CD4-positive, alpha-beta memory T cell (primary cell): ENCODE measurements at regions of chr14 and their contacts with region 1.

Region 1: DNA sequence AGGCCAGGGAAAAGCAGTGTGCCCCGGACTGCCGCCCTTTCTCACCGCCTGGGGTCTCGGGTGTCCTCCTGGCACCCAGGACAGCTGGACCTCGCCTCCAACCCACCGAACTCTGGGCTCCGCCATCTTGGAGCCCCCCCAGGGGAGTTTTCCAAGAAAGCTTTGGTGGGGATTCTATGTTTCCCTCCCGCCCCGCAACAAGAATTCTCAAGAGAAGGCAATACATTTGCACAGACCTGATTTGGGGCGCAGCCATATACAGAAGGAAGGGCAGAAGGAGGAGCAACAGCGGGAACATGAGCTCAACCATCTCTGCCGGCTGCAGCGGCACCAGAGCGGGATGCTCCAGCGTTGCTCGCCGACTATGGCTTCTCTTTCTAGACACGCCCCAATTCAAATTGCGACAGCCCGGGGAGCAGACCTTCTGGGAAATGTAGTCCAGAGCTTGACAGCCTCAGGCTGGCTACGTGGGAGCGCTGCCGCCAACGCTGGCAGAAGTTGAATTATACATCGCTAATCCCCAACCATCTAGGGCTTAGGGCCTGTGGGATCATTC is at the start of gene RDH11:
- DNase-seq: peak; percentile 83 to 91 (median 84)
- H3K4me3 ChIP-seq: peak within 1 kb of the TSS; percentile 91 to 94
- H3K4me3 Mint-ChIP-seq: peak within 1 kb of the TSS; percentile 89 to 93 (median 92)
- H3K27ac ChIP-seq: peak within 1 kb of the TSS; percentile 75
- H3K27ac Mint-ChIP-seq: peak within 1 kb of the TSS; percentile 78 to 98 (median 90)
- H3K4me1 ChIP-seq: peaks cover 15% of the 10 kb centered on the region
- H3K4me1 Mint-ChIP-seq: peaks cover 10 to 29% (median 18%) of the 10 kb centered on the region in 4 donors
- H3K27me3 ChIP-seq: no peaks in the 10 kb centered on the region
- H3K27me3 Mint-ChIP-seq: no peaks in the 10 kb centered on the region
- total RNA-seq, gene RDH11: 45.2 to 46.0 TPM

Region 2: DNA sequence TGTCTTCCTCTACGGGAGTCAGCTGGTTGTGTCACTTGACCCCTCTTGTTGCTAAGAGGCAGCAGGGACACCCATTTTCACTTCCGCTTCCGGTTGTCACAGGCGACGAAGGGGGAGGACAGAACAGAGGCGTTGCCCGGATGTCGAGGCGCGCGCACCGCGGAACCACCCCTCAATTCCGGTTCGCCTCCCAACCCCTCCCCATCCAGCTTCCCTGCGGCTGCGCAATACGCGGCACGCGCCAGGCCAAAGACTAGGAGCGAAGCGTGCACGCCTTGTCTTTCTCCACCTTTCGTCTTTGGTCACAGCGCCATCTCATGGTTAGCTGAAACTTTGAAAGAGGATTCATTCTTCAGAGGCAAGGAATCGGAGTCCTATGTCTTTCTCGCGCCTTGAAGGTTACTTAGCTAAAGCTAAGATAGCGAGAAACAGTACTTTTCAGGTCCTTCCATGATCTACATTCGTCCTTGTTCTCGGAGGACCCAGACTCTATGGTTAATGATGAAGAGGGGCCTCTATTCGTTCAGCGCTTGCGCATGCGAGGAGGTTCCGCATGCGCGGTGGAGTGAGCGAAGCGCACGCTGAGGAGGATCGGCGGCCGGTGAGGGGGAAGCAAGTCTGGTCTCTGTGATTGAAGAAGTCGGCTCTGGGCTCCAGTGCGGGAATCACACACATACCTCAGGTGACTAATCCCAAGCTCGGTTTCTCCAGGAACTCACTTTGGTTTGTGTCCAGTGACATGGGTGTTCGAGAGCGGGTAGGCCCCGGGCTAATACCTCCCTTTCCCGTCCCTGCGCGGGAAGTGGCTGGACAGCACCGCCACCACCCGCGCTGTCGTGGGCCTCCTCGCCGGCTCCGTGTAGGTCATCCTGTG is 335.5 kb before region 1 on chr14 and contains the starts of genes ATP6V1D and EIF2S1:
- CTCF ChIA-PET with region 1: interaction called, 8 read pairs
- POLR2A ChIA-PET with region 1: interaction called, 5 read pairs
- intact Hi-C with region 1: loop called (anchors 1 kb)
- DNase-seq: peak; percentile 99 to 100 (median 100)
- H3K4me3 ChIP-seq: peak within 1 kb of the TSS; percentile 88 to 97
- H3K4me3 Mint-ChIP-seq: peak within 1 kb of the TSS; percentile 96 to 100 (median 100)
- H3K27ac ChIP-seq: peak within 1 kb of the TSS; percentile 90
- H3K27ac Mint-ChIP-seq: peak within 1 kb of the TSS; percentile 92 to 100 (median 99)
- H3K4me1 ChIP-seq: peaks cover 72% of the 10 kb centered on the region
- H3K4me1 Mint-ChIP-seq: peaks cover 44 to 93% (median 70%) of the 10 kb centered on the region in 4 donors
- H3K27me3 ChIP-seq: no peaks in the 10 kb centered on the region
- H3K27me3 Mint-ChIP-seq: no peaks in the 10 kb centered on the region
- total RNA-seq, gene ATP6V1D: 26.8 to 35.0 TPM
- total RNA-seq, gene EIF2S1: 62.0 to 72.1 TPM

Region 3: DNA sequence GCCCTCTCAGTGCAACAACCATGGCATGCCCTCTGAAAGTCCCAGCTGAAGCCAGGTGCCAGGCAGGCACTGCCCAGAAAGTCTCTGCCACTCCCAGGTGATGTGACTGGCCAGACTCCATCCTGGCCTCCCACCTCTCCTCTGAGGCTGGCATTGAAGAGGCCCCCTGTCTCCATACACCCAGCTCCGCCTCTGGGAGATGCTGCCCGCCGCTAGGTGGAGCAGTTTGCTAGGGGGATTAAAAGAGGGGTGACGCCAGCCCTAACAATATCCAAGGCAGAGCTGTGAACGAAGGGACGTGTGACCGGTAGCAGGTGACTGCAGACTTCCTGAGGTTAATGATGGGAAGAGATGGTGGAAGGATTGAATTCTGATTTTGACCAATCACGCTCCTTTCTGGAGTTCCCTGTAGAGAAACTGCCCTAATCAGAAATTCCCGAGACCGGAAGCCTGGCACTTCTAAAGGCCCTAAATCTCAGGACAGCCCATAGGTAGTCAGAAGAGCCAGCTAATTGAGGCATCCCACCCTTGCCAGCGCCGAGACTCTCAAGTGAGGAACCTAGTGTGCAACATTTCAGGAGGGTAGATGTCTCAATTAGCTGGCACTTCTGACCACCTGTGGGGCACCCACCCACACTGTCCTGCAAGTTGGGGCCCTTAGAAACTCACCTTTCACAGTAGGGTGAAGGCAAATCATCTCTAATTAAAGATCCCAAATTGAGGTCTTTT is 275.2 kb before region 1 on chr14:
- CTCF ChIA-PET with region 1: no interaction called
- POLR2A ChIA-PET with region 1: no interaction called
- intact Hi-C with region 1: no loop called
- DNase-seq: peak in 4 of 5 donors; percentile 8 to 19 (median 11)
- H3K4me3 ChIP-seq: no peak overlapping the region
- H3K4me3 Mint-ChIP-seq: no peak overlapping the region
- H3K27ac ChIP-seq: no peak overlapping the region
- H3K27ac Mint-ChIP-seq: no peak overlapping the region
- H3K4me1 ChIP-seq: no peaks in the 10 kb centered on the region
- H3K4me1 Mint-ChIP-seq: no peaks in the 10 kb centered on the region
- H3K27me3 ChIP-seq: no peaks in the 10 kb centered on the region
- H3K27me3 Mint-ChIP-seq: peaks cover 2 to 4% of the 10 kb centered on the region in 2 donors

Region 4: GRCh38 chr14:67619446-67620216 is 75.8 kb before region 1 on chr14 and contains the start of gene ARG2:
- CTCF ChIA-PET with region 1: interaction called, 8 read pairs
- POLR2A ChIA-PET with region 1: interaction called, 5 read pairs
- intact Hi-C with region 1: loop called (anchors 2 kb)
- DNase-seq: peak; percentile 95 to 96 (median 95)
- H3K4me3 ChIP-seq: peak within 1 kb of the TSS; percentile 52 to 54
- H3K4me3 Mint-ChIP-seq: peak within 1 kb of the TSS; percentile 87 to 92 (median 89)
- H3K27ac ChIP-seq: peak within 1 kb of the TSS; percentile 75
- H3K27ac Mint-ChIP-seq: peak within 1 kb of the TSS; percentile 88 to 98 (median 97)
- H3K4me1 ChIP-seq: peaks cover 15% of the 10 kb centered on the region
- H3K4me1 Mint-ChIP-seq: peaks cover 7 to 25% (median 21%) of the 10 kb centered on the region in 4 donors
- H3K27me3 ChIP-seq: peaks cover 4% of the 10 kb centered on the region
- H3K27me3 Mint-ChIP-seq: peaks cover 2 to 7% of the 10 kb centered on the region in 2 donors
- total RNA-seq, gene ARG2: 0.55 TPM in 1 of 2 experiments, not detected in the other

Region 5: DNA sequence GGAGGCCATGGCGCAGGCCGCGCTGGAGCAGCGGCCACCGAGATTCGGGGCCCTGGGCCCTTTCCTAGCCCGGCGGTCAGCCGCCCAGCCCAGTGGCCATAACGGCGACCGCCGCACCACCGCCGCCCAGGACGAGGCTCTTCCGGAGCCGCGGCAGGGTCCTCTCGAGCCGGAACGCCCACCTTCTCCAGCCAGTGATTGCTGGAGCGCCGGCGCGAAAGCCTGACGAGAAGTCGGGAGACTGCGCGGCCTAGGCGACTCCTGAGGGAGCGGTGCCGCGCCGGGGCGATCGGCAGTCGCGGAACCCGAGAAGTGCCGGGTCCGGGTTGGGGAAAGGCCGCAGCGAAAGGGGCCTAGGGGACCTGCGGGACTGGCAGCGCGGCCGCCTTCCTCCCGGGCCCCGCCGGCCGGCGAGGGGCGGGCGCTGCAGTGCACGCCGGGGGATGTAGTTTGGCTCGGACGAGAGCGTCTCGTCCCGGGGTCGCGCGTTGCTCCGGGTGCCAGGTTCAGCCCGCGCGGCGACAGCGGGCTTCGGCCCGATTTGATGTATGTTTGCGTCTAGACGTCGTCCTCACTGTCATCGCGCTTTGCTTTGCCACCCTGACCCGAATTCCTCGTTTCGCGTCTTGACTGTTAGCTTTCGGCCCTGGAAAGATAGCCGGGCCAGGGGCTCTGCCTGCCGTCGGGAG is 20.8 kb before region 1 on chr14 and contains the start of gene VTI1B:
- CTCF ChIA-PET with region 1: interaction called, 6 read pairs
- POLR2A ChIA-PET with region 1: interaction called, 28 read pairs
- intact Hi-C with region 1: loop called (anchors 1 kb)
- DNase-seq: peak; percentile 78 to 85 (median 81)
- H3K4me3 ChIP-seq: peak within 1 kb of the TSS; percentile 66 to 96
- H3K4me3 Mint-ChIP-seq: peak within 1 kb of the TSS; percentile 86 to 94 (median 91)
- H3K27ac ChIP-seq: peak within 1 kb of the TSS; percentile 87
- H3K27ac Mint-ChIP-seq: peak within 1 kb of the TSS; percentile 72 to 95 (median 92)
- H3K4me1 ChIP-seq: peaks cover 48% of the 10 kb centered on the region
- H3K4me1 Mint-ChIP-seq: peaks cover 23 to 54% (median 39%) of the 10 kb centered on the region in 4 donors
- H3K27me3 ChIP-seq: no peaks in the 10 kb centered on the region
- H3K27me3 Mint-ChIP-seq: no peaks in the 10 kb centered on the region
- total RNA-seq, gene VTI1B: 71.1 to 72.6 TPM